Activated CD8-positive, alpha-beta memory T cell treated with anti-CD3 and anti-CD28 coated beads, Interleukin-2, amount 10 ng/mL, durations not matched to agents 7 days and 5 days (primary cell): ENCODE measurements at regions of chr20 and their contacts with region 1.

Region 1: DNA sequence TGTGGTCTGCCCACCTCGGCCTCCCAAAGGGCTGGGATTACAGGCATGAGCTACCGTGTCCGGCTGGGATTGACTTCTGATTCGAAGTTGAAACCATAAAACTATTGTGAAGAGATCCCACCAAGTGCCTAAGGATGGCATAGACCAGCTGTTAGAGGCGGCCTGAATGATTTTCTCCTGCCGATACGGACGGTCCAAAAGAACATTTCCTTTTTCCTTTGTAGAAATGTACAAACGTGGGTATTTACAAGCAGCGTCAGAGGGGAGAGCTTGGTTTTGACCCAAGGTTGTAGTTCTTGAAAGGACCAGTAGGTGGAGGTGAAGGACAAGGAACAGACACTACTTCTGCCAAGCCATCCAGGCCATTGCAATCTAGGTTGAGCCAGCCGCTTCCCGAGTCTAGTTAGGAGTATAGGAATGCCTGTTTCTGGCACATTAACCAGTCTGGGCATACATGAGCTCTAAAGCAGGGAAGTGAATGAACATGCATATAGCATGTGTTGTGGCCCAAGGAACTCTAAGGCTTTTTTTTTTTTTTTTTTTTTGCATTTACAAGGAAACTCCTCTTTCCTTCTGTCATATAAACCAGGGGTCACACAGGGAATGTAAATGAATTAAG is 29.1 kb downstream of the MOCS3 start:
- DNase-seq: peak; percentile 71
- ATAC-seq: peak; percentile 93
- H3K4me3 Mint-ChIP-seq: no peak overlapping the region
- H3K27ac Mint-ChIP-seq: no peak overlapping the region
- H3K4me1 Mint-ChIP-seq: peaks cover 4% of the 10 kb centered on the region
- H3K27me3 Mint-ChIP-seq: peaks cover 40% of the 10 kb centered on the region

Region 2: DNA sequence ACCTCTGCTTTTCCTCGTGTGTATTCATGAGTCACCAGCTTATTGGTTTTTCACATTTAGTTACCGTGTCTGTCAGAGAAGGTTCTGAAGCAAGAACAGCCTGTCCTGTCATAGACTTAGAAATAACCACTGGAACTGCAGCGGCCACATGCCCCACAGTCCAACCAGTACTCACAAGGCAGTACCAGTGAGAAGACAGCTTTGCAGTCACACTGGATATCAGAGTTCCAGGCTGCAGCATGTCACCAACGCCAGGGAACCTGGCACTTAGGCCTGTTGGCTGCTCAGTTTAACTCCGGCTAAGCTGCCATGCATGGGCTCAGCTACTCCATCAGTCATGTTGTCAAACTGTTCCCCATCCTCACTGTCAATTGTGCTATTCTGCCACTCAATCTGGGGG is 96.6 kb before region 1 on chr20:
- CTCF ChIA-PET with region 1: no interaction called
- DNase-seq: no peak
- ATAC-seq: no peak
- H3K4me3 Mint-ChIP-seq: no peak overlapping the region
- H3K27ac Mint-ChIP-seq: no peak overlapping the region
- H3K4me1 Mint-ChIP-seq: peaks cover 38% of the 10 kb centered on the region
- H3K27me3 Mint-ChIP-seq: no peaks in the 10 kb centered on the region

Region 3: DNA sequence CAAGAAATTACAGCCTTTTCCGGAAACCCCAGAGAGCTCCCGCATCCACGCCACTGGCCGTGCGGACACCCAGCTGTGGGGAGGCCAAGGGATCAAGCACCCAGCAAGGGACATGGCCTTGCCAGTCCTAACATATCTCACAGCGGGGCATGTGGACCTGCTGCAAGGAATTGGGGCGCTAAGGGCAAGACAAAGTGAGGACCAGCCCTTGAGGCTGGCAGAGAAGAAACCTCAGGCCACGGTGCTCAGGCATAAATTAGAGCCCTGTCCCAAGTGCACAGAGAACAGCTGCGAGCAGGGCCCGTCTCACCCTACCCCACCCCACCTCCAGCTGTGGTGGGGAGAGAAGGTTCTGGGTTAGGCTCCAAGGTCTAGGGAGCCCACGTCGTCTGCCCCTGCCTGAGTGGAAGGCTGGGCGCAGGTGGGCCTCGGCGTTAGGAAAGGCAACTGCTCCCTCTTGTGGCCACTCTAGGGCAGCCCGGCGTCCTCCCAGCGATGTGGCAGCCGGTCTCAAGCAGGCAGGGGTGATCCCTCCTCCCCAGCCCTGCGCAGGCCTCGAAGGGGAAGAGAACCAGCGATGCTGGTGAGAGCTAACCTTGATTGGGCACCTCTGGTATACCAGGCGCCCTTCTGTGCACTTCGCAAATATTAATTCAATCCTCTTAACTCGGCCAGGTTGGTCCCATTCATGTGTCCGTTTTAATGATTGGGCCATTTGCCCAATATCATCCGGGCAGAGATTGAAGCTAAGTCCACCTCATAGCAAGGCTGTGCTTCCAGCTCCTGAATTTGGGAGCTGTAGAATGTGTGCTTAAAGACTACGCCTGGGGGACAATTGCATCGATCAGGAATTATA is 319.0 kb after region 1 on chr20:
- CTCF ChIA-PET with region 1: interaction called, 143 read pairs
- DNase-seq: peak; percentile 76
- ATAC-seq: peak; percentile 96
- H3K4me3 Mint-ChIP-seq: no peak overlapping the region
- H3K27ac Mint-ChIP-seq: no peak overlapping the region
- H3K4me1 Mint-ChIP-seq: peaks cover 3% of the 10 kb centered on the region
- H3K27me3 Mint-ChIP-seq: peaks cover 30% of the 10 kb centered on the region

Region 4: DNA sequence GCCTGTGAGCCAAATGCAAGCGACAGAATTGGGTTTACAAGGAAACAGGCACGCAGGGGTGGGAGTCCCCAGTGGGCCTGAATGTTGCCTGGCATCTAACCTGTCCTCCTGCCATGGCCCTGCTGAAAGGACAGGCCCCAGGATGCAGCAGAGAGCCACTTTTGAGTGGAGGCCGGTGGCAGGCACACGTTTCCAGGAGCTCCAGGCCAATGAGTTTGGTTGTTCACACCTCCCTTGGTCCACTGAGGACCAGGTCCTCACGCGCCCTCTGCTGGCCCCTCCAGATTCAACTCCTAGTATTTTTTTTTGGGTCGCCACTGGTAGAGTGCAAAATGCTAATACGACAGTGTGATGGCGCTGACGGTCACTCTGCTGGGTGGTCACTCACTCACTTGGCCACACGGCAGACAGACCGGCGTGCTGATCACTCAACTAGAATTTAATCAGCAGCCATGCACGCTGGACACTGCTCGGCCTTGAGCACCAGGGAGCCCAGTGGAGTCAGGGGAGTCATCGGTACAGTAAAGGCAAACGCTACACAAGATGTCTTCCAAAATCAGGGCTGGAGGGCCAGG is 636.5 kb after region 1 on chr20:
- CTCF ChIA-PET with region 1: interaction called, 12 read pairs
- DNase-seq: peak; percentile 77
- ATAC-seq: peak; percentile 71
- H3K4me3 Mint-ChIP-seq: no peak overlapping the region
- H3K27ac Mint-ChIP-seq: no peak overlapping the region
- H3K4me1 Mint-ChIP-seq: peaks cover 22% of the 10 kb centered on the region
- H3K27me3 Mint-ChIP-seq: peaks cover 4% of the 10 kb centered on the region